T-cell (primary cell): ENCODE measurements at regions of chr18 and their contacts with region 1.

Region 1: GRCh38 chr18:49731860-49732311 is 81.4 kb downstream of the ACAA2 start:
- DNase-seq: no peak
- ATAC-seq: no peak
- H3K4me3 ChIP-seq: no peak overlapping the region
- H3K4me3 Mint-ChIP-seq: no peak overlapping the region
- H3K27ac ChIP-seq: no peak overlapping the region
- H3K27ac Mint-ChIP-seq: no peak overlapping the region
- H3K4me1 ChIP-seq: peaks cover 0 to 2% of the 10 kb centered on the region in 2 experiments
- H3K4me1 Mint-ChIP-seq: no peaks in the 10 kb centered on the region
- H3K27me3 ChIP-seq: peaks cover 0 to 11% of the 10 kb centered on the region in 2 experiments
- H3K27me3 Mint-ChIP-seq: peaks cover 2 to 8% of the 10 kb centered on the region in 2 donors

Region 2: DNA sequence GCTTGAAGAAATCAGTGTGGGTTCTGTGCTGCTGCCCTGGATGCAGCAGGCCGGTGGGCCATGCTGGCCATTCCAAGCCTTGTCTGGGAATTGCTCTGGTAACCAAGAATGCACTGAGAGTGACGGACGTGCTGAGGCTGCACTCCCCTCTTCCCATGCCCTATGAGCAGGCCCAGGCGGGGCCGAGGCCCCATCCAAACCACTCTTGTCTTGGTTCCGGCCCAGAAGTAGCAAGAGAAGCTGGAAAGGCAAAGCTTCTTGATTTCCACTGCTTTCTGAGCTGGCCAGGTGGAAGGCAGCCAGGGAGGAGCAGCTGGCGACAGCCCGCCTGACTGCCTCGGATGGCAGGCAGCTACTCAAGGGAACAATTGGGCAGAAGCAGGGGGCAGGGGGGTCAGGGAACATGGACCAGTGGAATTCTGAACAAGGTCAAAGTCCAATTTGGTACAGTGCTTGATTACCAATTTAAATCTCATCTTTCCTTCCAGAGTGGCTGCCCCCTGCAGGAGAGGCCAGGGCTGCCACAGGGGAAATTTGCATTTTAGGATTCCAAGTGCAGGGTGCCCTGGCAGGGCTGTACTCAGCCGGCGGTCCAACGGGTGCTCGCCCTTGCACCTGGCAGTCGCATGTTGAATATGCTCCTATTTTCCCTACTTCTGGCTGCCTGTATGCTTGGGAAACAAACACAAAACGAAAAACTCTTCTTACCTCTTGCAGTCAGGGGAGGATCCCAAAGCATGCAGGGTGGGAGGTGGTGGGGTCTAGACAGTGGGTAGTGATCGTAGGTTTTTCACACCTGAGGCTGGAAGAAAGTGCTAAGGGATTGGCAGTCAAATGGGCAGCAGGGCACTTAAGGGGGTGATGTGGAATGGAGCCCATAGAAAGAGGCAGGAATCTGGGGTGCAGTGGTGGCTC is 102.7 kb before region 1 on chr18:
- CTCF ChIA-PET with region 1: no interaction called
- POLR2A ChIA-PET with region 1: no interaction called
- DNase-seq: peak in 1 of 35 experiments; percentile 4
- ATAC-seq: no peak
- H3K4me3 ChIP-seq: no peak overlapping the region
- H3K4me3 Mint-ChIP-seq: no peak overlapping the region
- H3K27ac ChIP-seq: no peak overlapping the region
- H3K27ac Mint-ChIP-seq: no peak overlapping the region
- H3K4me1 ChIP-seq: no peaks in the 10 kb centered on the region
- H3K4me1 Mint-ChIP-seq: no peaks in the 10 kb centered on the region
- H3K27me3 ChIP-seq: peaks cover 0 to 15% of the 10 kb centered on the region in 2 experiments
- H3K27me3 Mint-ChIP-seq: peaks cover 0 to 21% of the 10 kb centered on the region in 2 donors

Region 3: GRCh38 chr18:49813069-49813318 is 81.1 kb after region 1 on chr18:
- CTCF ChIA-PET with region 1: no interaction called
- POLR2A ChIA-PET with region 1: no interaction called
- DNase-seq: peak in 1 of 35 experiments; percentile 13
- ATAC-seq: peak in 2 of 4 experiments; percentile 1
- H3K4me3 ChIP-seq: peak overlapping the region; percentile 89 to 91
- H3K4me3 Mint-ChIP-seq: peak overlapping the region; percentile 91 to 99 (median 95)
- H3K27ac ChIP-seq: peak overlapping the region; percentile 92
- H3K27ac Mint-ChIP-seq: peak overlapping the region; percentile 97
- H3K4me1 ChIP-seq: peaks cover 11 to 30% of the 10 kb centered on the region in 2 experiments
- H3K4me1 Mint-ChIP-seq: peaks cover 53 to 63% (median 53%) of the 10 kb centered on the region in 3 donors
- H3K27me3 ChIP-seq: no peaks in the 10 kb centered on the region
- H3K27me3 Mint-ChIP-seq: no peaks in the 10 kb centered on the region

Region 4: DNA sequence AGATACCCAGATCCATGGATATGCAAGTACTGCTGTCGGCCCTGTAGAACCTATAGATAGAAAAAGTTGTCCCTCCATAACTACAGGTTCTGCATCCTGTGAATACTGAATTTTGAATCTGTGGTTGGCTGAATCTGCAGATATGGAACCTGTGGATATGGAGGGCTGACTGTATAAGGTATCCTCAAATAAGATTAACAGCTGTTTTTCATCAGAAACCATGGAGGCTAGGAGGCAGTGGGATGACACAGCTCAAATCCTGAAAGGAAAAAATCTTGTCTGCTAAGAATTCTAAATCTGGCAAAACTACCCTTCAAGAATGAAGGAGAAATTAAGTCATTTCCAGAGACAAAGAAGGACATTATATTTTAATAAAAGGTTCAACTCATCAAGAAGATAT is 96.1 kb after region 1 on chr18:
- CTCF ChIA-PET with region 1: no interaction called
- POLR2A ChIA-PET with region 1: interaction called in 1 of 2 experiments, 14 read pairs
- DNase-seq: no peak
- ATAC-seq: no peak
- H3K4me3 ChIP-seq: no peak overlapping the region
- H3K4me3 Mint-ChIP-seq: no peak overlapping the region
- H3K27ac ChIP-seq: no peak overlapping the region
- H3K27ac Mint-ChIP-seq: no peak overlapping the region
- H3K4me1 ChIP-seq: no peaks in the 10 kb centered on the region
- H3K4me1 Mint-ChIP-seq: peaks cover 0 to 2% (median 0%) of the 10 kb centered on the region in 3 donors
- H3K27me3 ChIP-seq: peaks cover 0 to 2% of the 10 kb centered on the region in 2 experiments
- H3K27me3 Mint-ChIP-seq: peaks cover 0 to 4% of the 10 kb centered on the region in 2 donors